Psoas muscle (tissue), 8 donors: ENCODE measurements at regions of chr2 and their contacts with region 1.

Region 1: GRCh38 chr2:240232961-240233893 is 92.8 kb upstream of the OTOS start:
- DNase-seq: peak; percentile 89 to 96
- ATAC-seq: peak; percentile 78 to 84 (median 80)
- H3K4me3 ChIP-seq: peak overlapping the region; percentile 53
- H3K27ac ChIP-seq: peak overlapping the region; percentile 93
- H3K4me1 ChIP-seq: peaks cover 34% of the 10 kb centered on the region
- H3K27me3 ChIP-seq: no peaks in the 10 kb centered on the region
- CTCF ChIP-seq: peak; percentile 97

Region 2: GRCh38 chr2:240344903-240345302 is 111.7 kb after region 1 on chr2:
- intact Hi-C with region 1: loop called in 1 of 2 experiments (anchors 2 kb)
- DNase-seq: no peak
- ATAC-seq: no peak
- H3K4me3 ChIP-seq: no peak overlapping the region
- H3K27ac ChIP-seq: no peak overlapping the region
- H3K4me1 ChIP-seq: peaks cover 9% of the 10 kb centered on the region
- H3K27me3 ChIP-seq: no peaks in the 10 kb centered on the region
- CTCF ChIP-seq: no peak

Region 3: DNA sequence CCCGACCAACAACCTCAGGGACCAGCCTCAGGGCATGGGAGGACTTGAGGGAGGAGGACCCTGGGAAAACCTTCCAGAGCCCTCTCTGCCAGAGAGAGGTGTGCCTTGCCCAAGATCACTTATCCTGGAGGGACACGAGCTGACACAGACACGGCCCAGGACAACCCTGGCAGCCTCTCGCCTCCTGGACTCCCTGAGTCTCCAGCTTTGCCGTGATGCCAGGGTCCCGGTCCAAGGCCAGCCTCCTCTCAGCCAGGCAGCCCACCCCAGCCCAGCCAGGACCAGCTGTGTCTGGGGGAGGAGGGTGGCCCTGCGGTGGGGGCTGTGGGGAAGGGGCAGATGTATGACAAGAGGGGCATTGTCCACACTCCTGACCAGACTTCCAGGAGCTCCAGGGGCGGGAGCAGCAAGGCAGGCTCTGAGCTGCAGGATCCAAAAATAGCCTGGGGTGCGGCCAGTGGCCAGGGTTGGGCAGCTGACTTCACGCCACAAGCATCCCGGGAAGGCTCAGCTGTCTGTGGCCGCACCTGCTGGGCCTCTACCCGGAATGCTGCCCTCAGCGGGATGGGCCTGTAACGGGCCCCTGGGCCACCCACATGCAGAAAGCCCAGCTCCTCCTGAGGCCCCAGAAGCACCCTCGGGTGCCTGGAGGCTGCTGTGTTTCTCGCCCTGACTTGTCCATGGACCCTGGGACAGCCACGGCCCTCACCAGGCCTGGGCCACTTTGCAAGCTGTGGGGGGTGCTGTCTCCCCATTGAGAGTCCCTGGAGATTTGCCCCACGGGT is 136.8 kb after region 1 on chr2:
- intact Hi-C with region 1: loop called (anchors 5 kb)
- DNase-seq: peak; percentile 89 to 95
- ATAC-seq: peak; percentile 80 to 86 (median 84)
- H3K4me3 ChIP-seq: no peak overlapping the region
- H3K27ac ChIP-seq: peak overlapping the region; percentile 94
- H3K4me1 ChIP-seq: peaks cover 72% of the 10 kb centered on the region
- H3K27me3 ChIP-seq: no peaks in the 10 kb centered on the region
- CTCF ChIP-seq: no peak

Region 4: GRCh38 chr2:240387669-240388358 is 154.6 kb after region 1 on chr2:
- intact Hi-C with region 1: loop called in 1 of 2 experiments (anchors 5 kb)
- DNase-seq: peak; percentile 79 to 92
- ATAC-seq: peak; percentile 65 to 81 (median 76)
- H3K4me3 ChIP-seq: peak overlapping the region; percentile 48
- H3K27ac ChIP-seq: peak overlapping the region; percentile 68
- H3K4me1 ChIP-seq: peaks cover 37% of the 10 kb centered on the region
- H3K27me3 ChIP-seq: no peaks in the 10 kb centered on the region
- CTCF ChIP-seq: no peak